PC-9 (cell line): ENCODE measurements at regions of chr17 and their contacts with region 1.

Region 1: GRCh38 chr17:61002316-61002736 is 324.7 kb downstream of the BCAS3 start:
- DNase-seq: no peak
- H3K4me3 ChIP-seq: no peak overlapping the region
- H3K27ac ChIP-seq: no peak overlapping the region
- H3K4me1 ChIP-seq: no peaks in the 10 kb centered on the region
- H3K27me3 ChIP-seq: no peaks in the 10 kb centered on the region
- CTCF ChIP-seq: peak; percentile 75

Region 2: GRCh38 chr17:60941028-60941427 is 61.3 kb before region 1 on chr17:
- CTCF ChIA-PET with region 1: no interaction called
- POLR2A ChIA-PET with region 1: no interaction called
- intact Hi-C with region 1: no loop called
- DNase-seq: no peak
- H3K4me3 ChIP-seq: no peak overlapping the region
- H3K27ac ChIP-seq: no peak overlapping the region
- H3K4me1 ChIP-seq: no peaks in the 10 kb centered on the region
- H3K27me3 ChIP-seq: no peaks in the 10 kb centered on the region
- CTCF ChIP-seq: no peak

Region 3: GRCh38 chr17:61389670-61390478 is 387.5 kb after region 1 on chr17:
- CTCF ChIA-PET with region 1: no interaction called
- POLR2A ChIA-PET with region 1: no interaction called
- intact Hi-C with region 1: loop called (anchors 1 kb)
- DNase-seq: peak in 1 of 2 experiments; percentile 51
- H3K4me3 ChIP-seq: no peak overlapping the region
- H3K27ac ChIP-seq: no peak overlapping the region
- H3K4me1 ChIP-seq: 0 out of 2 replicates have a peak, but pooled peaks cover 6% of the 10 kb centered on the region
- H3K27me3 ChIP-seq: no peaks in the 10 kb centered on the region
- CTCF ChIP-seq: peak; percentile 88

Region 4: DNA sequence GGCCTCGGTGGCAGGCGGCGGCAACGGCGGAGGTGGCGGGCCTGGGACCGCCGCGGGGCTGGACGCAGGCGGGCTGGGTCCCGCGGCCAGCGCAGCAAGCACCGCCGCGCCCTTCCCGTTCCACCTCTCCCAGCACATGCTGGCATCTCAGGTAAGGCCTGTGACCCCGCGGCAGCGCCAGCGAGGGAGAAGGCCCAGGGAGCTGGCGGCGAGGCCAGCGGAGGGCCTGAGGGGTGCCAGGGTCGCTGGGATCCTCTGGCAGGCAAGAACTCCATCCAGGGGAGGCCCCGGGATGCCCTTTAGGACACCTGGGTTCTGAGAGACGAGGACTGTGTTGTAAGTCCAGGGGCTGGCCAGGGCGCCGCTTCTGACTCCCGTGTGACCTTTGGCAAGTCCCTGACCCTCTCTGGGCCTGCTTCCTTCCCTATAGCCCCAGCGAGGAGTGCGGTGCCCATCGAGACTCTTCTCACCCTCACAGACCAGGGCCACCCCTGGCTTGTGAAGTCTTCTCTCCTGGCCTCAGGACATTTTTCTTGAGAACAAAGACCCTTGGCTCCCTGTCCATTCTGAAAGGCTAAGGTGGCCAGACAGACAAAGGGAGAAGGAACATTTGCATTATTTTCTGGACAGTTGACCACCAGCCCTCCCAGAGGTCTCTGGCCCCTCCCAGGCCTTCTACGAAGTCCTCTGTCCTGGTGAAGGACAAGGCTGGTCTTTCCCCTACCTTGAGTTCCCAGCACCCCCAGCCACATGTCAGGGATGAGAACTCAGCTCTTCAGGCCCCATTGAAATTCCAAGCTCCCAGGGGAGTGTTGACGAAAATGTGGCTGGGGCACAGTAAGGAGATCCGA is 403.6 kb after region 1 on chr17:
- CTCF ChIA-PET with region 1: interaction called, 19 read pairs
- POLR2A ChIA-PET with region 1: no interaction called
- intact Hi-C with region 1: loop called (anchors 5 kb)
- DNase-seq: no peak
- H3K4me3 ChIP-seq: no peak overlapping the region
- H3K27ac ChIP-seq: no peak overlapping the region
- H3K4me1 ChIP-seq: no peaks in the 10 kb centered on the region; the same call in 1 of the 2 replicates
- H3K27me3 ChIP-seq: no peaks in the 10 kb centered on the region
- CTCF ChIP-seq: no peak